ENCODE measurements at regions of chr13 and their contacts with region 1.

Region 1: DNA sequence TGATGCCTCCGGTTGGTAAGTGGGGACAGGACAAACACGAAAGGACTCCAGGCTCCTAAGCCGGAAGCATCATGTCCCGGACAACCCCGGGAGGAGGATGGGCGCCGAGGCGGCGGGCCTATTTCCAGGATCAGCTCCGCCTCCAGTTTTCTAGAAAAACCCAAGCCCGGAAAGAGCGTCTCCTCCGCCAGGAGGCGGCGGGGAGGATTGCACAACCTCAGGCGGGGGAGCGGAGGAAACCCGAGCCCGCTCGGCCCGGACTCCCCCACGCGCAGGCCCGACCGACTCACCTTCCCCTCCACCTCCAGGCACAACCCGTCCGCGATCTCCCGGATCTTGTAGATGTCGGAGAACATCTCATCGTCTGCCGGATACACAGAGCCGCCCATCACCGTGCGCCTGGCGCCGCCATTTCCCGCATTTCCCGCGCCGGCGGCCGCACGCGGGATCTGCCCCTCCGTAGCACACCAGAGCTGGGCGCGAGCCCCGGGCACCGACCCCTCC is 509 bp downstream of the TPT1 start:
- DNase-seq: peak; percentile 58
- ATAC-seq: peak; percentile 33
- H3K4me3 ChIP-seq: peak overlapping the region; percentile 61 to 62
- H3K27ac ChIP-seq: peak overlapping the region; percentile 95
- H3K4me1 ChIP-seq: peaks cover 27 to 54% of the 10 kb centered on the region in 2 experiments
- H3K27me3 ChIP-seq: no peaks in the 10 kb centered on the region
- CTCF ChIP-seq: 0 out of 6 replicates have a peak, but pooled peaks of 1 of the 3 experiments have one; percentile 22
- POLR2A ChIP-seq: no peak
- RAD21 ChIP-seq: no peak

Region 2: GRCh38 chr13:45352031-45352430 is 11.6 kb after region 1 on chr13:
- CTCF ChIA-PET with region 1: interaction called, 3 read pairs
- POLR2A ChIA-PET with region 1: interaction called, 12 read pairs
- RAD21 ChIA-PET with region 1: no interaction called
- intact Hi-C with region 1: no loop called
- DNase-seq: no peak
- ATAC-seq: peak; percentile 80
- H3K4me3 ChIP-seq: no peak overlapping the region
- H3K27ac ChIP-seq: peak overlapping the region; percentile 33; the same call in 1 of the 2 replicates
- H3K4me1 ChIP-seq: peaks cover 0 to 13% of the 10 kb centered on the region in 2 experiments; a peak in 2 of 4 replicates
- H3K27me3 ChIP-seq: no peaks in the 10 kb centered on the region
- CTCF ChIP-seq: no peak
- POLR2A ChIP-seq: no peak
- RAD21 ChIP-seq: no peak

Region 3: GRCh38 chr13:45356966-45357672 is 16.6 kb after region 1 on chr13:
- CTCF ChIA-PET with region 1: no interaction called
- POLR2A ChIA-PET with region 1: interaction called, 12 read pairs
- RAD21 ChIA-PET with region 1: no interaction called
- intact Hi-C with region 1: no loop called
- DNase-seq: no peak
- ATAC-seq: no peak
- H3K4me3 ChIP-seq: no peak overlapping the region
- H3K27ac ChIP-seq: no peak overlapping the region
- H3K4me1 ChIP-seq: peaks cover 11 to 23% of the 10 kb centered on the region in 2 experiments
- H3K27me3 ChIP-seq: no peaks in the 10 kb centered on the region
- CTCF ChIP-seq: no peak
- POLR2A ChIP-seq: no peak
- RAD21 ChIP-seq: no peak

Region 4: DNA sequence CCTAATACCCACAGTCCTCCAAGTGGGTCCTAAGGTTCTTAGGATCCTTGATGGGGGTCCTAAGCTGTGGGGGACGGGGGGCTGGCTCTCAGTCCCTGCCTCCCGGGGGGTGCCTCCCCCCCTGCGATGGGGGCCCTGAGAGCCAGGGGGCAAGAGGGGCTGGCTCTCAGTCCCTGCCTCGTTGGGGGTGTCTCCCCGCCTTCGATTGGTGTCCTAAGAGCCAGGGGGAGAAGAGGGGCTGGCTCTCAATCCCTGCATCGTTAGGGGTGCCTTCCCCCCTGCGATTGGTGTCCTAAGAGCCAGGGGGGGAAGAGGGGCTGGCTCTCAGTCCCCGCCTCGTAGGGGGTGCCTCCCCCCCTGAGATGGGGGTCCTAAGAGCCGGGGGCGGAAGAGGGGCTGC is 40.7 kb after region 1 on chr13:
- CTCF ChIA-PET with region 1: no interaction called
- POLR2A ChIA-PET with region 1: no interaction called
- RAD21 ChIA-PET with region 1: no interaction called
- intact Hi-C with region 1: no loop called
- DNase-seq: no peak
- ATAC-seq: no peak
- H3K4me3 ChIP-seq: no peak overlapping the region
- H3K27ac ChIP-seq: no peak overlapping the region
- H3K4me1 ChIP-seq: no peaks in the 10 kb centered on the region
- H3K27me3 ChIP-seq: no peaks in the 10 kb centered on the region
- CTCF ChIP-seq: no peak
- POLR2A ChIP-seq: no peak
- RAD21 ChIP-seq: no peak

Region 5: GRCh38 chr13:45564133-45564776 is 223.8 kb after region 1 on chr13:
- CTCF ChIA-PET with region 1: no interaction called
- POLR2A ChIA-PET with region 1: no interaction called
- RAD21 ChIA-PET with region 1: no interaction called
- intact Hi-C with region 1: no loop called
- DNase-seq: no peak
- ATAC-seq: no peak
- H3K4me3 ChIP-seq: no peak overlapping the region
- H3K27ac ChIP-seq: no peak overlapping the region
- H3K4me1 ChIP-seq: peaks cover 0 to 5% of the 10 kb centered on the region in 2 experiments; a peak in 1 of 4 replicates
- H3K27me3 ChIP-seq: no peaks in the 10 kb centered on the region
- CTCF ChIP-seq: no peak
- POLR2A ChIP-seq: no peak
- RAD21 ChIP-seq: no peak

Region 6: GRCh38 chr13:45728759-45729158 is 388.3 kb after region 1 on chr13:
- CTCF ChIA-PET with region 1: no interaction called
- POLR2A ChIA-PET with region 1: no interaction called
- RAD21 ChIA-PET with region 1: no interaction called
- intact Hi-C with region 1: no loop called
- DNase-seq: peak; percentile 45
- ATAC-seq: peak; percentile 98
- H3K4me3 ChIP-seq: no peak overlapping the region
- H3K27ac ChIP-seq: no peak overlapping the region
- H3K4me1 ChIP-seq: peaks cover 0 to 2% of the 10 kb centered on the region in 2 experiments; a peak in 1 of 4 replicates
- H3K27me3 ChIP-seq: no peaks in the 10 kb centered on the region; the same call in 1 of the 2 replicates
- CTCF ChIP-seq: peak; percentile 22 to 66 (median 57); a peak in 4 of 6 replicates
- POLR2A ChIP-seq: no peak
- RAD21 ChIP-seq: peak; percentile 49

Measured in HCT116 (cell line).